T-cell (primary cell): ENCODE measurements at regions of chr10 and their contacts with region 1.

Region 1: DNA sequence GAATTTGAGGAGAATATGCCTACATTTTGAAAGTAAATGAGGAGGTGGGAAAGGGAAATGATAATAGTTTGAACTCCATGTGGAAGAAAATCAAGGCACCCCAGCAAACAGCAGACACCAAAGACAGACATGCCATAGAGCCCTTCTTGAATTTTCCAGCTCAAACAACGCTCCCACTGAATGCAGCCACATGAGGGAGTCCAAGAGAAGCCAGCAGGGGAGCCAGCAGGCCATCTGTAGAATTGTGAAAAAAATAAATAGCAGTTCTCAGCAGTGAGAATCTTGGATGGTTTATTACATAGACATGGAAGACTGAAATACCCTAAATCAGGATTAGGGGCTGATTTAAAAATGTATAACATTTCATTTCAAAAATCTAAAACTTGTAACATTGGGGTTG is 1567.3 kb upstream of the LRRTM3 start:
- DNase-seq: no peak
- ATAC-seq: no peak
- H3K4me3 ChIP-seq: no peak overlapping the region
- H3K4me3 Mint-ChIP-seq: no peak overlapping the region
- H3K27ac ChIP-seq: no peak overlapping the region
- H3K27ac Mint-ChIP-seq: no peak overlapping the region
- H3K4me1 ChIP-seq: no peaks in the 10 kb centered on the region
- H3K4me1 Mint-ChIP-seq: no peaks in the 10 kb centered on the region
- H3K27me3 ChIP-seq: no peaks in the 10 kb centered on the region
- H3K27me3 Mint-ChIP-seq: no peaks in the 10 kb centered on the region

Region 2: GRCh38 chr10:65231148-65231547 is 127.4 kb before region 1 on chr10:
- CTCF ChIA-PET with region 1: interaction called in 1 of 2 experiments, 11 read pairs
- POLR2A ChIA-PET with region 1: no interaction called
- DNase-seq: no peak
- ATAC-seq: no peak
- H3K4me3 ChIP-seq: no peak overlapping the region
- H3K4me3 Mint-ChIP-seq: no peak overlapping the region
- H3K27ac ChIP-seq: no peak overlapping the region
- H3K27ac Mint-ChIP-seq: no peak overlapping the region
- H3K4me1 ChIP-seq: no peaks in the 10 kb centered on the region
- H3K4me1 Mint-ChIP-seq: no peaks in the 10 kb centered on the region
- H3K27me3 ChIP-seq: no peaks in the 10 kb centered on the region
- H3K27me3 Mint-ChIP-seq: no peaks in the 10 kb centered on the region

Region 3: DNA sequence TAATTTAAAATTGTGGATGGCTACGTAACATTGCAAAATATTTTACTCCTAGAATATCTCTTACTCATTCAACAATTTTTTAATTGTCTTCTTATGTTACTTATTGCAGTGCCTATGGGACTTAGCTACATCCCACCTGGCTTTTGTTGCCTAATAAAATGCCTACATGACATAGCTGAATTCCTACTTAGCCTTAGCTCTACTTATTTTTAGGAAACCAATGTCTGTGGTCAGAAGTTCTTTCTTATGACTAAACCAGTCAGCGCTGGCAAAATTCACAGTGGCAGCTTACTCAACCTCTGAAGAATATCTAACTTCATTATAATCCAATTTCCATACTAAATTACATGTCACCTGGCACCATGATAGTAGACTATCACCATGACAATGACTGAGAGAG is 45.2 kb before region 1 on chr10:
- CTCF ChIA-PET with region 1: no interaction called
- POLR2A ChIA-PET with region 1: no interaction called
- DNase-seq: no peak
- ATAC-seq: no peak
- H3K4me3 ChIP-seq: no peak overlapping the region
- H3K4me3 Mint-ChIP-seq: no peak overlapping the region
- H3K27ac ChIP-seq: no peak overlapping the region
- H3K27ac Mint-ChIP-seq: no peak overlapping the region
- H3K4me1 ChIP-seq: no peaks in the 10 kb centered on the region
- H3K4me1 Mint-ChIP-seq: no peaks in the 10 kb centered on the region
- H3K27me3 ChIP-seq: no peaks in the 10 kb centered on the region
- H3K27me3 Mint-ChIP-seq: no peaks in the 10 kb centered on the region